Naive thymus-derived CD8-positive, alpha-beta T cell (primary cell): ENCODE measurements at regions of chr1 and their contacts with region 1.

Region 1: DNA sequence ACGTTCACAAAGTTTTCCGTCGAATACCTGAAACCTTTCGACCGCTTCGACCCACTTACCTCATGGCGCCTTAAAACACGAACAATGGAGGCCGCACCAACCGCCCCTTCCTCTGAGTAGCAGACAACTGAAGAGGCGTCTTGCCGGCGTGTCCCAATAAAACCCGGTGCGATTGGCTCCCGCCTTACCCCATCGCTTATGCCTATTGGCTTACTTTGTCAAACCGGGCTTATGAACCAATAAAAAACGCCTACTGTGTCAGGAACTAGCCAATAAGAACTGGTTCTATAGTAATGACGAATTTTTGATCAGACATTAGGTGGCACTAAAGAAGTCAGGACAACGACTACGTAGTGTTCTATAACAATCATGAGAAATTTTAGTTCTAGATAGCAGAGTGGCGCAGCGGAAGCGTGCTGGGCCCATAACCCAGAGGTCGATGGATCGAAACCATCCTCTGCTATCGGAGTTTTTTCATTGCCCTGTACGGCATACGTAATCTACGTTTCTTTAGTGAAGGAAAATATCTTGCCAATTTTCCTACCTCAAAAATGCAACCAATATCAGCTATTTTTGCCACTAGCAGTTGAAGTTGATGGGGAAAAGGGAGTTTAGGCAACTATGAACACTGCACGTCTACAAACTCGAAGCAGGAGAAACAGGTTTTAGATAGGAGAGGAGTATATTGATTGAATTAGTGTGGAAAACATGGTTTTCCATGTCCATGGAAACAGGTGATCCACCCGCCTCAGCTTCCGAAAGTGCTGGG is at the start of gene ILF2:
- DNase-seq: peak; percentile 88 to 100 (median 97)
- ATAC-seq: peak; percentile 90 to 91
- H3K4me3 Mint-ChIP-seq: no peak within 1 kb of the TSS
- H3K27ac Mint-ChIP-seq: peak within 1 kb of the TSS in 2 of 10 donors; percentile 78 to 81
- H3K4me1 Mint-ChIP-seq: peaks cover 6 to 32% (median 22%) of the 10 kb centered on the region in 4 donors
- H3K27me3 Mint-ChIP-seq: peaks cover 0 to under 1% (median 0%) of the 10 kb centered on the region in 5 donors
- polyA plus RNA-seq, gene ILF2: 115 to 140 (median 121) TPM

Region 2: DNA sequence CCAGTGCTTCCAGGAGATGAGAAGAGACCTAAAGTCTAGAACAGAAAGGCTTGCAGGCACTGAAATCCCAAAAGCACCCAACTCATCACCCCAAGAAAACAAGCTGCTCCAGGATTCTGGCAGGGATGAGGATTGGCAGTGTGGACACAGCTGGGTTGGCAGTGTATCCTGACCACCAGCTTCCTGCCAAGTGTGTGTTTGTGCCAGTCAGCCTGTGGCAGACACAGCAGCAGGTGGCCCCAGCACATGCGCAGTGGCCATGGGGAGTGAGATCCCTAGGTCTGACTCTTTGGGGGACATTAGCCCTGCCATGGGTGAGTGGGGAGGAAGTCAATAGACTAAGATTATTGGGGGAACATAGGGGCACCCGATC is 21.2 kb before region 1 on chr1:
- POLR2A ChIA-PET with region 1: interaction called, 10 read pairs
- DNase-seq: no peak
- ATAC-seq: peak; percentile 42 to 45
- H3K4me3 Mint-ChIP-seq: peak overlapping the region; percentile 61 to 91 (median 83)
- H3K27ac Mint-ChIP-seq: peak overlapping the region; percentile 71 to 97 (median 94)
- H3K4me1 Mint-ChIP-seq: peaks cover 32 to 58% (median 55%) of the 10 kb centered on the region in 4 donors
- H3K27me3 Mint-ChIP-seq: no peaks in the 10 kb centered on the region

Region 3: GRCh38 chr1:153658400-153659174 is 12.5 kb before region 1 on chr1 and contains the start of gene SNAPIN:
- POLR2A ChIA-PET with region 1: interaction called, 18 read pairs
- DNase-seq: peak; percentile 81 to 94 (median 86)
- ATAC-seq: peak; percentile 97 to 98
- H3K4me3 Mint-ChIP-seq: peak within 1 kb of the TSS; percentile 88 to 98 (median 96)
- H3K27ac Mint-ChIP-seq: peak within 1 kb of the TSS; percentile 88 to 97 (median 95)
- H3K4me1 Mint-ChIP-seq: peaks cover 0 to 21% (median 12%) of the 10 kb centered on the region in 4 donors
- H3K27me3 Mint-ChIP-seq: no peaks in the 10 kb centered on the region
- polyA plus RNA-seq, gene SNAPIN: 66.6 to 77.4 (median 72.3) TPM

Region 4: DNA sequence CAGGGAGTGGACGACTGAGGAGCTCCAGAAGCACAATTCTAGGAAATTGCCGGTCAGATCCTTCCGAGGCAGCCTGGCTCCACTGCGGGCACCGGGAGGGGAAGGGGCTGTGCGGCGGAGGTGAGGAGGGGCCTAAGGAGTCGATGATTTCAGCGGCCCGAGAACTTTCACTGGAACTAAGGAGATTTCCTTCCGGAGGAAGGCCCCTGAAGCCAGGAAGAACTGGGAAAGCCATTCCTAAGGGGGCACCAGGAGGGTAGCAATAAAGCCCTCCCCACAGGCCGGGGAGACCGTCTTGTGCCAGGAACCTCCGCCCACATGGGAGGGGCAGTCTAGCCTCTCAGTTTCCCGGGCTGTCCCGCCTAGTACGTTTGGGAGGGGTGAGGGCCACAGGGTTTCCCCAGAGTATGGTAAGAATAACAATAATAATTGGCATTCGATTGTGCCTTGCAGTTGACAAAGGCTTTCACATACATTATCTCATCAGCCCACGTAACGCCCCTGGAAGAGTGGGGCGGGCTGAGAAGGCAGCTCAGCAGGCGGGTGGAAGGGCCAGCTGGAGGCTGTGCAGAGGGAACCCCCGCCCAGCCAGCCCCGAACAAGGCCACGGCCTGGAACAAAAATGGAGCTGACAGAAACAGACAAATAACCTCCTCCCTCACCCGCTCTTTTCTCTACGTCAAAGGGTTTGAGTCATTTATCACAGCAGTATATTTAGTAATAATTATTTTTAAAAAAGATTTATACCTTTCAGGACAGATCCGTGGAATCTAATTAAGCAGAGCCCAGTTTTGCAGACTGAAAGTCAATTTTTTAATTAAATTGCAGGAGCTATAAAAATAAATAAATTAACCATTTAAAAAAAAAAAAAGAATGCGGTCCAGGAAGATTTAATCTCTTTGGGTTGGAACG is 27.2 kb after region 1 on chr1:
- POLR2A ChIA-PET with region 1: no interaction called
- DNase-seq: no peak
- ATAC-seq: no peak
- H3K4me3 Mint-ChIP-seq: peak overlapping the region in 5 of 10 donors; percentile 2 to 53 (median 36)
- H3K27ac Mint-ChIP-seq: peak overlapping the region in 2 of 10 donors; percentile 24 to 82
- H3K4me1 Mint-ChIP-seq: peaks cover 0 to 6% (median 3%) of the 10 kb centered on the region in 4 donors
- H3K27me3 Mint-ChIP-seq: peaks cover 0 to 13% (median 2%) of the 10 kb centered on the region in 5 donors